ENCODE measurements at regions of chr1 and their contacts with region 1.

Region 1: GRCh38 chr1:6245086-6245868 is 1.3 kb downstream of the HES3 start:
- DNase-seq: peak in 1 of 2 experiments; percentile 94
- H3K4me3 ChIP-seq: peak overlapping the region; percentile 59 to 91 (median 80)
- H3K27ac ChIP-seq: no peak overlapping the region
- H3K4me1 ChIP-seq: peaks cover 14 to 40% (median 31%) of the 10 kb centered on the region in 4 experiments
- H3K27me3 ChIP-seq: peaks cover 10 to 36% (median 25%) of the 10 kb centered on the region in 4 experiments
- CTCF ChIP-seq: peak in 2 of 3 experiments; percentile 82 to 85; a peak in 3 of 4 replicates
- EP300 ChIP-seq: peak; percentile 42 to 66; a peak in 2 of 3 replicates
- POLR2A ChIP-seq: no peak
- RAD21 ChIP-seq: peak; percentile 67 to 80

Region 2: DNA sequence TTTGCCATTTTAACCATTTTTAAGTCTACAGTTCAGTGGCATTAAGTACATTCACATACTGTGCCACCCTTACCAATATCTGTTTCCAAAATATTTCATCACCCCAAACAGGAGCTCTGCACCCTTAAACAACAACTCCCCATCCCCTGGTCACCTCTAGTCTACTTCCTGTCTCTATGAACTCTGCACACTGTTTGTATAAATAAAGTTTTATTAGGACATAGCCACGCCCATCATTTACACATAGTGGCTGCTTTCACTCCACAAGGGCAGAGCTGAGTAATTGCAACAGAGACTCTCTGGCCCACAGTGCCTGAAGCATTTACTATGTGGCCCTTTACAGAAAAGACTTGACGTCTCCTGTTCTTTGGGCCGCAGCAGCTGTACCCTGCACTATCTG is 169.5 kb before region 1 on chr1:
- CTCF ChIA-PET with region 1: no interaction called
- POLR2A ChIA-PET with region 1: no interaction called
- DNase-seq: no peak
- H3K4me3 ChIP-seq: no peak overlapping the region
- H3K27ac ChIP-seq: no peak overlapping the region
- H3K4me1 ChIP-seq: peaks cover 0 to 4% (median 1%) of the 10 kb centered on the region in 4 experiments; a peak in 4 of 7 replicates
- H3K27me3 ChIP-seq: 0 out of 7 replicates have a peak, but pooled peaks cover 0 to 2% (median 0%) of the 10 kb centered on the region in 4 experiments
- CTCF ChIP-seq: no peak
- EP300 ChIP-seq: no peak
- POLR2A ChIP-seq: no peak
- RAD21 ChIP-seq: no peak

Region 3: DNA sequence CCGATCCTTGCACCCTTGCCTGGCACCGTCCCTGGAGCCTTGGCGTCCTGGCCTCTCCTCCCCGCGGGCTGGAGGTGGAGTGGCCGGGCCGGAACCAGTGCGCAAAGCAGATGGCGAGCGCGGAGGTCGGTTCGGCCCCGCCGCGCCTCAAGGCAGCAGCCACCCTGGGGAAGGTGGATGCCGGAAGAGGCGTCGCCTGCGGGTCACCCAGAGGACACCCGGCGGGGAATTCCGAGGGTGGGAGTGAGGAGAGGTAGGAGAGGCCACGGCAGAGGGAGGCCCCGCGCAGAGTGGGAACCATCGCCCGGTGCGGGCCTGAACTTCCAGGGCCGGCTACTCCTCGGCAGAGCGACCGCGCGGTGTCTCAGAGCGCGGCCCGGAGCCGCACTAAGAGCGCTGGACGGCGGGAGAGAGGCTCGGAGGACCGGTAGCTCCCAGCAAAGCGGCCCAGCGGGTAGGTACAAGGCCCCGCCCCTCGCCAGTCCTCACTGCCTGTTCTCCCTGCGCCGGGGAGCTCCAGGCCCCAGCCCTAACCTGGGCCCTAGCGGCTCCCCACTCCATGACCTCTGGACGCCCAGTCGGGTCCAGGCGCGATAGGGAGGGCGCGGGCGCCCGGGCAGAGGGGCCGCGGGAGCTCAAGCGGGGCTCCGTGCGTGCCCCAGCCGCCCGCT is 39.3 kb before region 1 on chr1 and contains the start of gene RNF207:
- CTCF ChIA-PET with region 1: interaction called, 353 read pairs
- POLR2A ChIA-PET with region 1: interaction called, 78 read pairs
- DNase-seq: peak in 1 of 2 experiments; percentile 87
- H3K4me3 ChIP-seq: peak within 1 kb of the TSS; percentile 35 to 61 (median 48)
- H3K27ac ChIP-seq: no peak within 1 kb of the TSS
- H3K4me1 ChIP-seq: peaks cover 1 to 29% (median 24%) of the 10 kb centered on the region in 4 experiments
- H3K27me3 ChIP-seq: peaks cover 1 to 52% (median 40%) of the 10 kb centered on the region in 4 experiments
- CTCF ChIP-seq: no peak
- EP300 ChIP-seq: no peak
- POLR2A ChIP-seq: 0 out of 3 replicates have a peak, but pooled peaks of 1 of the 2 experiments have one; percentile 36
- RAD21 ChIP-seq: no peak
- total RNA-seq, gene RNF207: 3.9 and 4.2 TPM in 2 replicates

Region 4: GRCh38 chr1:6269720-6270400 is 24.6 kb after region 1 on chr1:
- CTCF ChIA-PET with region 1: interaction called, 51 read pairs
- POLR2A ChIA-PET with region 1: interaction called, 3 read pairs
- DNase-seq: no peak
- H3K4me3 ChIP-seq: no peak overlapping the region
- H3K27ac ChIP-seq: no peak overlapping the region
- H3K4me1 ChIP-seq: peaks cover 0 to 18% (median 8%) of the 10 kb centered on the region in 4 experiments; a peak in 6 of 7 replicates
- H3K27me3 ChIP-seq: no peaks in the 10 kb centered on the region
- CTCF ChIP-seq: no peak
- EP300 ChIP-seq: no peak
- POLR2A ChIP-seq: no peak
- RAD21 ChIP-seq: no peak

Region 5: DNA sequence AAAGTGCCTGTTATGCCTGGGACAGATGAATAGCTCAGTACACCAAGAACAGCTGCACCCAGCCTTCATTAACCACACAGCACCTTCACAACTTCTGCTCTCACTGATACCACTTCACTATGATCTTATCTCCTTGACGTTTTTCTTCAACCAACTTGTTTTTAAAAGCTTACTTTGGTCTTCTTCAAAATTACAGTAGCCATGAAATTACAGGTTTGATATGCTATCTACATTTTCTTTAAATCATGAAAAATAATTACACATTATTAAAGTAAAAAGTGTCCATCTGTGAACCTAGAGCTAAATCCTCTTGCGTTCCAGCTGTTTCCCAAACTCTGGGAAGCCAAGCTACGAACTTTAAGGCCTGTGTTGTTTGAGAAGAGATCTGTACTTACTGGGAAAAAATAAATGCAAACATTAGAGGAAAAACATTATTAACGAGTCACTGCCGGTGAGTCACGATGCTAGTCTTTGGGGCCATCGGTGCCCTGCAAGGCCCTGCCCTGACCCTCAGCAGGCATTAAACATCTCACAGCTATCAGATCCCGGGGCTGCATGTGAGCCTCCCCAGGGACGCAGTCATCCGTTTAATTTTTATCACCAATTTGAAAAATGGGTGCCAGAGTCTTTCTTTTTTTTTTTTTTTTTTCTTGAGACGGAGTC is 72.0 kb after region 1 on chr1:
- CTCF ChIA-PET with region 1: interaction called, 12 read pairs
- POLR2A ChIA-PET with region 1: no interaction called
- DNase-seq: no peak
- H3K4me3 ChIP-seq: no peak overlapping the region
- H3K27ac ChIP-seq: no peak overlapping the region
- H3K4me1 ChIP-seq: no peaks in the 10 kb centered on the region
- H3K27me3 ChIP-seq: no peaks in the 10 kb centered on the region
- CTCF ChIP-seq: no peak
- EP300 ChIP-seq: no peak
- POLR2A ChIP-seq: no peak
- RAD21 ChIP-seq: no peak

Region 6: GRCh38 chr1:6359216-6360116 is 114.2 kb after region 1 on chr1:
- CTCF ChIA-PET with region 1: interaction called, 52 read pairs
- POLR2A ChIA-PET with region 1: interaction called, 5 read pairs
- DNase-seq: peak in 1 of 2 experiments; percentile 57
- H3K4me3 ChIP-seq: no peak overlapping the region
- H3K27ac ChIP-seq: 0 out of 2 replicates have a peak overlapping the region, but pooled peaks have one; percentile 21
- H3K4me1 ChIP-seq: peaks cover 3 to 27% (median 14%) of the 10 kb centered on the region in 4 experiments
- H3K27me3 ChIP-seq: no peaks in the 10 kb centered on the region
- CTCF ChIP-seq: no peak
- EP300 ChIP-seq: no peak
- POLR2A ChIP-seq: no peak
- RAD21 ChIP-seq: no peak

Region 7: GRCh38 chr1:6401673-6402072 is 156.4 kb after region 1 on chr1:
- CTCF ChIA-PET with region 1: interaction called, 33 read pairs
- POLR2A ChIA-PET with region 1: no interaction called
- DNase-seq: no peak
- H3K4me3 ChIP-seq: no peak overlapping the region
- H3K27ac ChIP-seq: no peak overlapping the region
- H3K4me1 ChIP-seq: no peaks in the 10 kb centered on the region
- H3K27me3 ChIP-seq: peaks cover 0 to 4% (median 2%) of the 10 kb centered on the region in 4 experiments; a peak in 4 of 7 replicates
- CTCF ChIP-seq: no peak
- EP300 ChIP-seq: no peak
- POLR2A ChIP-seq: no peak
- RAD21 ChIP-seq: no peak

Region 8: DNA sequence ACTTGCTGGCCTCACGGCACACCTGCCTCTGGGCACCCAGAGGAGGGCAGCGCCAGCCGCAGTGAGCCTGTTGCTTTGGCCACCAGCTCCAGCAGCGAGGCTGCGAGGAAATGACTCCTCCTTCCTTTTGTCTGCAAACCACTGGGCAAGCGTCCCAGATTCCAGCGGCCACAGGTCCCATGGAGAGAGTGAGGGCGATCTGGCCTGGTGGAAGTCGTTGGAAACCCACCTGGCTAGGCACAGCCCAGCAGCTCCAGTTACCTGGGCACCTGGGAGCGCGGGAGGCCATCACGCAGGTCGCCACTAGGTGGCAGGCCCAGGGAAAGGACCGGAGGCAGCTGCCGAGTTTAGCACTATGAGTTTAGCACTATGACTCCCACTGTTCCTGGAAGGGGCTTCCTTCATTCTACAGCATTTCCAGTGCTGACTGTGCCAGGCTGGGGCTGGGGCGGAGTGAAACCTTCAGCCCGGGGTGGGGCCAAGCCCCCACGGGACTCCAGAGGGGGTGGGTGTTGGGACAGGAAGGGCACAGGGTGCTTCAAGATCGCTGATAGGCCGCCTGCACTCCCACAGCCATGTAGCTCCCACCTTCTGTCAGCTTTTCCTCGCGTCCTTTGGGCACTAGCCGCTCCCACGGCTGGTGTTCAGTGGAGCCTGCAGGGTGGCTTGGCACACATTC is 178.2 kb after region 1 on chr1:
- CTCF ChIA-PET with region 1: interaction called, 23 read pairs
- POLR2A ChIA-PET with region 1: interaction called, 3 read pairs
- DNase-seq: peak; percentile 57 to 92
- H3K4me3 ChIP-seq: peak overlapping the region in 3 of 4 experiments; percentile 15 to 52 (median 19); a peak in 5 of 8 replicates
- H3K27ac ChIP-seq: no peak overlapping the region
- H3K4me1 ChIP-seq: peaks cover 0 to 30% (median 11%) of the 10 kb centered on the region in 4 experiments; a peak in 5 of 7 replicates
- H3K27me3 ChIP-seq: peaks cover 63 to 87% (median 79%) of the 10 kb centered on the region in 4 experiments
- CTCF ChIP-seq: peak in 2 of 3 experiments; percentile 95 to 96; a peak in 3 of 4 replicates
- EP300 ChIP-seq: no peak
- POLR2A ChIP-seq: no peak
- RAD21 ChIP-seq: peak; percentile 54 to 69

Measured in H1 (cell line).